Activated T-helper 2 cell treated with anti-CD3 and anti-CD28 coated beads, Interferon-gamma antibody, Interleukin-2, Interleukin-4, amounts not matched to agents 10 μg/mL and 5 μg/mL and 100 μg/mL, durations not matched to agents 14 hours and 24 hours and 36 hours (primary cell): ENCODE measurements at regions of chr9 and their contacts with region 1.

Region 1: GRCh38 chr9:35603987-35604577 is 980 bp upstream of the TESK1 start:
- DNase-seq: peak; percentile 99
- H3K4me3 Mint-ChIP-seq: peak overlapping the region; percentile 84
- H3K27ac Mint-ChIP-seq: peak overlapping the region; percentile 93
- H3K4me1 Mint-ChIP-seq: peaks cover 32% of the 10 kb centered on the region
- H3K27me3 Mint-ChIP-seq: no peaks in the 10 kb centered on the region

Region 2: GRCh38 chr9:35481347-35481975 is 122.6 kb before region 1 on chr9:
- intact Hi-C with region 1: no loop called
- DNase-seq: no peak
- H3K4me3 Mint-ChIP-seq: no peak overlapping the region
- H3K27ac Mint-ChIP-seq: no peak overlapping the region
- H3K4me1 Mint-ChIP-seq: no peaks in the 10 kb centered on the region
- H3K27me3 Mint-ChIP-seq: peaks cover 6% of the 10 kb centered on the region

Region 3: DNA sequence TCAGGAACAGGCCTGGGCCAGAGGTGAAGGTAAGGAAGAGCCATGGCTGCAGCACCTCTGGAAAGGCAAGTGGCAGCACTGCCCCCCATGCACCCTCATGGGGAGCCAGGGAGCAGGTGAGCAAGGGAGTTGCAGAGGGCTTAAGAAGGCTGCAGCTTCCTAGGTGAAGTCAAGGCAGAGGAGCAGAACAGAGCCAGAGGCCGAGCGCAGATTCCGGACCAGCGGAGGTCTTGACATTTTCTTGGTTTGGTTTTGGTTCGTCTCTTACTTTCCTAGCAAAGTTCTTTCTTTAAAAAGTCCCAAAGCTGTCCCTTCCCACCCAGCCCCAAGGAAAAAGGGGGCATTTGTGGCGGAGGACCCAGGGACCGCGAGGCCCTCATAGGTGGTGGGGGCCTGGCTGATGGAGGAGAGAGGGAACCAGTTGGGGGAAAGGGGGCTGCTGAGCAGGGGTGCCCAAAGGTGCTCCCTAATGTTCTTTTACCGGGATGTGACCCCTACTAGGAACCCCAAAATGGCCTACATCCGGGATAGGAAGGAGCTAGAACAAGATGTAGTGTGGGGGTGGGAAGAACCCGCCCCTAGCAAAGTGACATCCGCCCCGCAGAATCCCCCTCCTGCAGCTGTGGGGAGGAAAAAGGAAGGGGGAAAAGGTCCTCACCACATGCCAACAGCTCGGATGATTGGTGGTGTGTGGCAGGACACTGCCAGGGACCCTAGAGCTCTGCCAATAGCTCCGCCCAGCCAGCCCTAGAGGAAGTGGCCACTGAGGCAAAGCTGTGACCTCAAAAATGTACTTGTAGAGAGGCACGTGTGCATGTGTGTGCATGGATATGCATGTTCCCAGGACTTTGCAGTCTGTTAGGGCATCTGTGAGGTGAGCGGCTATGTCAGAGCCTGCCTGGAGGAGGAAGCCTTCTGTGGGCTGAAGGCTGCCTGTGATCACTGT is 15.0 kb after region 1 on chr9:
- intact Hi-C with region 1: loop called (anchors 1 kb)
- DNase-seq: peak; percentile 28
- H3K4me3 Mint-ChIP-seq: peak overlapping the region; percentile 47
- H3K27ac Mint-ChIP-seq: peak overlapping the region; percentile 95
- H3K4me1 Mint-ChIP-seq: peaks cover 63% of the 10 kb centered on the region
- H3K27me3 Mint-ChIP-seq: no peaks in the 10 kb centered on the region

Region 4: DNA sequence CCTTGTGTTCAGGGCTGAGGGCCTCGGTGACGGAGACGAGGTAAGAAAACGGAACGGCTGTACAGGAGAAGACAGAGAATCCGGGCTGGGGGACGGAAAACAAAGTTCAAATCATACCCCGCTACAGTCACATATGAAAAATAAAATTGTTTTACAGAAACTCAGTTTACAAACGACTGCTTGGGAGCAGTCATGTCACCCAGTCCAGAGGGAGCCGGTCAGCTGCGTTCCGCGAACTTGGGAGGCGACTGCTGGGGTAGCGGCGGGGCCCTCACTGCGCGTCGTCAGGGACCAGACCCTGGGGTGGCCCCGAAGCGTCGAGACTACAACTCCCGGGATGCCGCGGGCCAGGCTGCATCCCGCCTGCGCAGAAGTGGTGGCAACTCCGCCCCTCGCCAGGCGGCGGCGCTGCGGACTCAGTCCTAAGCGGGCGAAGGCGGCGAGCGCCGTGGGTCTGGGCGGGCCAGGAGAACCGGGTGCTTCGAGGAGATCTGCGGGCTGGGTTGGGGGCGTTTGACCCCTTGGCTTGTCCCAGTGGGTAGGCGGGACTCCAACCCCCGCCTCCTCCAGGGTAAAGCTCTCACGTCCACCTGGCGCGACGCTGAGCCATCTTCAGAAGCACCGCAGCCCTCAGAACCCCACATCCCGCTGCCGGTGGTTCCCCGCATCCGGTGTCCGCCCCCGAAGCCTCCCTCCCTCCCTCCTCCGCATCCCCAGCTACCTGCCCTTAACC is 42.6 kb after region 1 on chr9:
- intact Hi-C with region 1: loop called (anchors 1 kb)
- DNase-seq: peak; percentile 91
- H3K4me3 Mint-ChIP-seq: peak overlapping the region; percentile 96
- H3K27ac Mint-ChIP-seq: peak overlapping the region; percentile 96
- H3K4me1 Mint-ChIP-seq: peaks cover 45% of the 10 kb centered on the region
- H3K27me3 Mint-ChIP-seq: no peaks in the 10 kb centered on the region

Region 5: DNA sequence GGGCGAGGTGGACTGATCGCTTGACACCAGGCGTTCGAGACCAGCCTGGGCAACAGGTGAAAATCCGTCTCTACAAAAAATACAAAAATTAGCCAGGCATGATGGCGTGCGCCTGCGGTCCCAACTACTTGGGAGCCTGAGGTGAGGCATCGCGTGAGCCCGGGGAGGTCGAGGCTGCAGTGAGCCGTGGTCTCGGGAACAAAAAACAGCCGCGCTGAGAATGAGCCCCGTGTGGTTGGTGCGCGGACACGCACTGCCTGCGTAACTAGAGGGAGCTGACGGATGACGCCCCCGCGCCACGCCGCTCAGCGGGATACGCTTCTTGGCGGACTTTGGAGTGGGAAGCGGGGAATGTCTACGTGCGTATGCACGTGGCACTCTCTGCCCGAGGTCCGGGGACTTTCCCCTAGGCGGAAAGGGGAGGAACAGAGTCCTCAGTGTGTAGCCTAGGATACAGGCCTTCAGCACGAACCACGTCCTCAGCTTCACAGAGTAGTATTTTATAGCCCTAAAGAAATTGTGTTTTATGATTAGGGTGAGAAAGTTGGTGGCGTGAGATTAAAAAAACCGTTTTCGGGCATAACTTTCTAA is 53.6 kb after region 1 on chr9 and contains the start of gene RMRP:
- intact Hi-C with region 1: loop called (anchors 1 kb)
- DNase-seq: peak; percentile 87
- H3K4me3 Mint-ChIP-seq: peak within 1 kb of the TSS; percentile 85
- H3K27ac Mint-ChIP-seq: peak within 1 kb of the TSS; percentile 98
- H3K4me1 Mint-ChIP-seq: peaks cover 55% of the 10 kb centered on the region
- H3K27me3 Mint-ChIP-seq: peaks cover 3% of the 10 kb centered on the region
- total RNA-seq, gene RMRP: 5,290 and 6,583 TPM in 2 replicates

Region 6: DNA sequence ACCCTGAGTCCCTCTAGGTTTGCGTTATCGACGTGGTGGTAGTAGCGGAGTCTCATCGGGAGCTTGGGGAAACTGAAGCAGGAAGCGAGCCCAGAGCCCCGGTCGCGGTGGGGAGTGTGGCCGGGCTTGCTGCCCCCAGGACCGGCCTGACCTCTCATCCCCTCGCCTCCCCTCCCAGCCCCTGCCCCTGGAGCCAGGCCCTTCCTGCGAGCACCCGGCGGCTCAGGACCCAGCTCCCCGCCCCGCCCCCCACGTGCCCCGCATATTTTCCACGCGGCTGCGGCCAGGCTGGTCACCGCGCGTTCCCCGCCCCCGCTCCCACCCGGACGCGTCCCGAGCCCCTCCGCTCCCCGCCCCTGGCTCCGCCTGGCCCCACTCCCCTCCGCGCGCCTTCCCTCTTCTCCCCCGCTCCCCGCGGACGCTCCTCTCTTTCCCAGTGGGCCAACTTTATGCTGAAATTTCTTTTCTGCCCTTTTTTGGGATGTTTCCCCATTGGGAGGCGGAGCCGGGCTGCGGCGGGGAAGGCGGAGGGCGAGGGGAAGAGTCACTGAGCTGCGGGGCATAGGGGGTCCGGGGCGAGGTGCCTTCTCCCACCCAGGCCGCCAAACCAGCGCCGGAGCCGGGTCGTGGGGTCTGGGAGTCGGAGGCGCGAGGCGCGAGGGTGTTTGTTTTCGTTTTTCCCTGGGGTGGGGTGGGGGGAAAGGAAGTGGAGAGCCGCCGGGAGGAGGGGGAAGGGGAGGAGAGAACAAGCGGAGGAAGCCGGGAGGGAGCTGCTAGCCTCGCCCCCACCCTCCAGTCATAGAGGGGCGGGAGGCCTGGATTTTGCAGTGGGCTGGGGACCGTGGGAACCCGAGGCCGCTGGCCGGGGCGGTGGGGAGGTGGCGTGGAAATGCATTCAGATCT is 86.6 kb after region 1 on chr9:
- intact Hi-C with region 1: loop called (anchors 2 kb)
- DNase-seq: no peak
- H3K4me3 Mint-ChIP-seq: peak overlapping the region; percentile 79
- H3K27ac Mint-ChIP-seq: peak overlapping the region; percentile 58
- H3K4me1 Mint-ChIP-seq: peaks cover 12% of the 10 kb centered on the region
- H3K27me3 Mint-ChIP-seq: no peaks in the 10 kb centered on the region

Region 7: GRCh38 chr9:35748858-35749514 is 144.9 kb after region 1 on chr9 and contains the starts of genes GBA2 and RGP1:
- intact Hi-C with region 1: loop called (anchors 2 kb)
- DNase-seq: peak; percentile 70
- H3K4me3 Mint-ChIP-seq: peak within 1 kb of the TSS; percentile 92
- H3K27ac Mint-ChIP-seq: peak within 1 kb of the TSS; percentile 82
- H3K4me1 Mint-ChIP-seq: peaks cover 35% of the 10 kb centered on the region
- H3K27me3 Mint-ChIP-seq: no peaks in the 10 kb centered on the region
- total RNA-seq, gene GBA2: 54.0 and 57.0 TPM in 2 replicates
- total RNA-seq, gene RGP1: 17.0 and 17.1 TPM in 2 replicates

Region 8: GRCh38 chr9:35756275-35757225 is 152.5 kb after region 1 on chr9:
- intact Hi-C with region 1: loop called (anchors 2 kb)
- DNase-seq: peak; percentile 69
- H3K4me3 Mint-ChIP-seq: peak overlapping the region; percentile 98
- H3K27ac Mint-ChIP-seq: peak overlapping the region; percentile 98
- H3K4me1 Mint-ChIP-seq: peaks cover 29% of the 10 kb centered on the region
- H3K27me3 Mint-ChIP-seq: no peaks in the 10 kb centered on the region